ENCODE measurements at regions of chr22 and their contacts with region 1.

Region 1: DNA sequence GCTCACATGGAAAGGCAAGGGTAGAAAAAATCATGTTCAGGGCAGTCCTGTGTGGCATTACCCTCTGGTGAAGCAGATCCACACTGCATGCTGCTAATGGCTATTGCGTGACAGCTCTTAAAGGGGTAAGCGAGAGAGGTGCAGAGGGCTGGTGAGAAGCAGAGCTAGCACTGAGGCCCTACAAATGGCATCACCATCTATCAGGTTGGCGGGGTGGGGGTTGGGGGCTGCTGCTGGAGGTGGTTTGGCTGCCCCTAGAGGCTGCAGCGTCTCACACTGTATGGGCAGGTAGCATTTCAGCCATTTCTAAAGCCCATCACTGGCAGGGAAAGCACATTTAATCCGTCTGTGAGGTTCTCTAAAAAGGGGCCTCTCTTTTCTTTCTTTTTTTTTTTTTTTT is 16.9 kb upstream of the TMA7B start:
- DNase-seq: no peak
- H3K4me3 ChIP-seq: no peak overlapping the region
- H3K27ac ChIP-seq: no peak overlapping the region
- H3K4me1 ChIP-seq: no peaks in the 10 kb centered on the region
- H3K27me3 ChIP-seq: peaks cover 73% of the 10 kb centered on the region
- CTCF ChIP-seq: 0 out of 2 replicates have a peak, but pooled peaks have one; percentile 8

Region 2: GRCh38 chr22:39543095-39543494 is 400.2 kb before region 1 on chr22:
- CTCF ChIA-PET with region 1: no interaction called
- POLR2A ChIA-PET with region 1: no interaction called
- intact Hi-C with region 1: loop called (anchors 5 kb)
- DNase-seq: peak in 1 of 2 experiments; percentile 28
- H3K4me3 ChIP-seq: no peak overlapping the region
- H3K27ac ChIP-seq: no peak overlapping the region
- H3K4me1 ChIP-seq: no peaks in the 10 kb centered on the region
- H3K27me3 ChIP-seq: peaks cover 14% of the 10 kb centered on the region
- CTCF ChIP-seq: peak; percentile 38; the same call in 1 of the 2 replicates

Region 3: GRCh38 chr22:39845529-39845928 is 97.8 kb before region 1 on chr22:
- CTCF ChIA-PET with region 1: interaction called, 11 read pairs
- POLR2A ChIA-PET with region 1: no interaction called
- intact Hi-C with region 1: no loop called
- DNase-seq: no peak
- H3K4me3 ChIP-seq: no peak overlapping the region
- H3K27ac ChIP-seq: no peak overlapping the region
- H3K4me1 ChIP-seq: no peaks in the 10 kb centered on the region
- H3K27me3 ChIP-seq: peaks cover 14% of the 10 kb centered on the region
- CTCF ChIP-seq: no peak

Region 4: GRCh38 chr22:41177040-41177621 is 1233.8 kb after region 1 on chr22:
- CTCF ChIA-PET with region 1: no interaction called
- POLR2A ChIA-PET with region 1: no interaction called
- intact Hi-C with region 1: no loop called
- DNase-seq: no peak
- H3K4me3 ChIP-seq: no peak overlapping the region
- H3K27ac ChIP-seq: no peak overlapping the region
- H3K4me1 ChIP-seq: peaks cover 14% of the 10 kb centered on the region
- H3K27me3 ChIP-seq: no peaks in the 10 kb centered on the region
- CTCF ChIP-seq: no peak